Uterus (tissue), 4 donors: ENCODE measurements at regions of chr19 and their contacts with region 1.

Region 1: DNA sequence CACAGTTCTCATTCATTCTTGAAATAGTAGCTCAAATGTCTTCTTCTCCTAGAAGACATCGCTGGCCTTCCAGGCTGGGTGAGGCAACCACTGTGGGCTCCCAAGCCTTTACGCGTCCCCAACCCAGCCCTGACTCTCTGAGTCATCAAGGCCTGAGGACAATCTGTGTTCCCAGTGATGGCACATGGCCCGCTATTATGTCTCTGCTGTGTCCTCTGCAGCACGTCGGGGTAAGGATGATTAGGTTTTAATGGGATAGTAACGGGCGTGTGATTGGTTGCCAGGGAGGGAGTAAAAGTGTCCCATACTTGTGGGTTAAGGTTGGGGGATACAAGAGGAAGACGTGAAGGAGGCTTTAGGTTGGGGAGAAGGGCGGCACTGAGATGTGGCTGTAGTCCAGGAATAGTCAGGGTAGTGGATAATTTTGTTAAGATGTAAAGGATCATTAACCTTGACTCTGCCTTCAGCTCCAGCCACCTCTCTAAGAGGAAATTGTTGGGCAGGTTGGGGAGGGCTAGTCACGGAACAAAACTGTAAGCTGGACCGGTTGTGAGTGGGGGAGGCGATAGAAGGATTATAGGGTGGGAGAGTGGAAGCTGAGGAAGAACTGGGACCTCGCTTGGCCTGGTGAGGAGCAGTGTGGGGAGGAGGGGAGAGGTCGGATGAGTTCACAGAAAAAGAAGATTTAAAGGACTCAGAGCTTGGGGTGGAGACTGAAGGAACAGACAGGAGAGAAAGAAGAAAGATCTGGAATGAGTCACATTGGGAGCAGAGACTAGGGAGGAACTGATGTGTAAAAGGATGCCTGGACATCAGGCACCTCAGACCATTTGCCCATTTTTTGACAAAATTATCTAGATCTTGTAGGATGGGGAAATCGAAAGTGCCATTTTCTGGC is 27.9 kb upstream of the IGFL1 start:
- DNase-seq: no peak
- H3K4me3 ChIP-seq: no peak overlapping the region
- H3K27ac ChIP-seq: no peak overlapping the region
- H3K4me1 ChIP-seq: no peaks in the 10 kb centered on the region
- H3K27me3 ChIP-seq: no peaks in the 10 kb centered on the region
- CTCF ChIP-seq: no peak
- POLR2A ChIP-seq: no peak

Region 2: DNA sequence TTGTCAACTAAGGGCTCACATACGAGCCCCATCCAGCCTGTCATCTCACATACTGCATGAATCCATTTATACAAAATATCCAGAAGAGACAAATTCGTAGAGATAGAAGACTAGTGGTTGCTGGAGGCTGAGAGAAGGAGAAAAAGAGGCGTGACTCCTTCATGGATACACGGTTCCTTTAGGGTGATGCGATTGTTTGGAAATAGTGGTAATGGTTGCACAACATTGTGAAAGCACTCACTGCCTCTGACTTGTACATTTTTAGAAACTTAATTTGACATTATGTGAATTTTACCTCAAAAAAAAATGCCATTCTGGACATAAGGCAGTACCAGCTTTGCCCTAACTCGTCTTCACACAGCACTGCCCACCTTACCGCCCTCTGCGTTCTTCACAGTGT is 55.2 kb after region 1 on chr19:
- intact Hi-C with region 1: loop called (anchors 10 kb)
- DNase-seq: no peak
- H3K4me3 ChIP-seq: no peak overlapping the region
- H3K27ac ChIP-seq: no peak overlapping the region
- H3K4me1 ChIP-seq: no peaks in the 10 kb centered on the region
- H3K27me3 ChIP-seq: no peaks in the 10 kb centered on the region
- CTCF ChIP-seq: no peak
- POLR2A ChIP-seq: no peak